Activated naive CD4-positive, alpha-beta T cell treated with anti-CD3 and anti-CD28 coated beads, Interleukin-2, amount 10 ng/mL, durations not matched to agents 7 days and 5 days (primary cell): ENCODE measurements at regions of chr6 and their contacts with region 1.

Region 1: GRCh38 chr6:109455502-109456282 is at the start of gene MICAL1:
- DNase-seq: peak; percentile 87
- H3K4me3 Mint-ChIP-seq: peak within 1 kb of the TSS; percentile 99
- H3K27ac Mint-ChIP-seq: peak within 1 kb of the TSS; percentile 97
- H3K4me1 Mint-ChIP-seq: peaks cover 77% of the 10 kb centered on the region
- H3K27me3 Mint-ChIP-seq: no peaks in the 10 kb centered on the region

Region 2: DNA sequence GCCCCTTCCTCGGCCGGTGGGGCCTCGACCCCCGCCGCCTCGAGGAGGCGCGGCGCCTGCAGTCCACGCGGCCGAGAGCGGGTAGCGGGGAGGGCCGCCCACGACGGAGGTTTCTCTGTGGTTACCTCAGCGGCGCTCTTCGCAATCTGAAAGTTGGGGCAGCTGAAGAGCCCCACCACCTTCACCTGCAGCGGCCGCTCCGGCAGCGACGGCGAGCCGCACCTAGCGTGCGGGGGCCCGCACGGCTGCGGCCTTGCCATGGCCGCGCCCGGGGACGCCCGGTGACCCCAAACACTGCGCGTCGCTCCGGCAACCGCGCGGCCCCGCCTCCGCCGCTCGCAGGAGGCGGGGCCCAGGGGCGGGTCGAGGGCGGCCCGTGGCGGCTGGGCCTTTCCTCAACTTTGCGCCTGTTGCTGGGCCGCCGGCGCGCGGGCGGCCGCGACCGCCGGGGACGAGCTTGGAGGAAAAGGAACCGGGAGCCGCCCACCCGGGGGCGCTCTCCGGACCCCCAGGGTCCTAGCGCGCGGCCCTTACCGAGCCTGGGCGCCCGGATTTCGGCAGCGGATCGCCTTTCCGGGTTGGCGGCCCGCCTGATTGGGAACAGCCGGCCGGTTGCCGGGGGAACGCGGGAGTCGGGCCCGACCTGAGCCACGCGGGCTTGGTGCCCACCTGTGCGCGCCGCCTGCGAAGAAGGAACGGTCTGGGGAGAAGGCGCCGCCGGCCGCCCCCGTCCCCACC is 15.2 kb before region 1 on chr6 and contains the starts of genes PPIL6 and SMPD2:
- CTCF ChIA-PET with region 1: interaction called, 35 read pairs
- DNase-seq: peak; percentile 83
- H3K4me3 Mint-ChIP-seq: peak within 1 kb of the TSS; percentile 94
- H3K27ac Mint-ChIP-seq: peak within 1 kb of the TSS; percentile 87
- H3K4me1 Mint-ChIP-seq: peaks cover 29% of the 10 kb centered on the region
- H3K27me3 Mint-ChIP-seq: peaks cover 10% of the 10 kb centered on the region

Region 3: DNA sequence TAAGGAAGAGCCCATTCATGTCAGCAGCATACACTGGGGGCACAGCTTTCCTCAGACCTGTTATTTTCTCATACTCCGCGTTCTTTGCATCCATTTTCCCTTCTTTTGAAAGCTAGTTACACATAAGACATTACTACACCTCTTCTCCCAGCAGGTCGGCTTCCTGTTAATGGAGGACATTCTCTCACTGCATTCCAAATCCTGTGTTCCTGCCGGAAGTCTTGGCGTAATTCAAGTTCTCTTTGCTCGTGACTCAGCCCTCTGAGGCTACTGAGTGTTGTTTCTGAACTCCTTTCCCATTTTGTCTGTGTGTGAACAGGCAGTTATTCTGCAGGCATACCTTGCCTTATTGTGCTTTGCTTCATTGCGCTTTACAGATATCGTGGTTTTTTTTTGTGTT is 124.8 kb after region 1 on chr6:
- CTCF ChIA-PET with region 1: no interaction called
- DNase-seq: no peak
- H3K4me3 Mint-ChIP-seq: no peak overlapping the region
- H3K27ac Mint-ChIP-seq: no peak overlapping the region
- H3K4me1 Mint-ChIP-seq: no peaks in the 10 kb centered on the region
- H3K27me3 Mint-ChIP-seq: peaks cover 3% of the 10 kb centered on the region